Mammary epithelial cell (primary cell): ENCODE measurements at regions of chr7 and their contacts with region 1.

Region 1: DNA sequence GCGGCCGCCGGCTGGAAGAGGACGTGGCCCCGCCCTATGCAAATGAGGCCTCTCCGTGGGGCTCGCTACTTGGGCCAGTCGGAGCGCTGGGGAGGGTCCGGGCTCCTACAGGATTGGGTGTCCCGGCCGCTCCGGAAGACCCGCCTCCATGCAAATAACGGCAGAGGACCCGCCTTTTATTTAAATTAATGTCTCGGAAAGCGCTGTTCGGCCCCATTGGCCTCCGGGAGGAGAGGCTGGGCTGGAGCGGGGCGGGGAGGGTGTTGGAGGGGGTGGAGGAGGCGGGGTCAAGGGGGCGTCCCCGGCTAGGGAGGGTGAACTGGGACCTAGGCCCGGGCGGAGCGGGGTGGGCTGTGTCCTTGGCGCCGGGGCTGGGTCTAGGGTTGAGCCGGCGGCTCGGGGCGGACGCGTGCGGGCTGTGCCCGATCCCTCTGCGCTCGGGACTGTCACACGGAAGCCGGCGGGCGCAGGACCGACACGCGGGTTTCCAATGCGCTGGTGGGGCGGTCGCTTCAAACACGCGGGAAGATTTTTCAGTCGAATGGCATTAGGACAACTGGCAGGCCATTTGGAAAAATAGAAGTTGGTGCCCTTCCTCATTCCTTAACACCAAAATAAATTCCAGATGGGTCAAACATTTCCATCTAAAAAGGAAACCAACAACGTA is 344 bp upstream of the POLM start:
- DNase-seq: peak; percentile 99
- H3K4me3 ChIP-seq: peak overlapping the region; percentile 53 to 84 (median 65)
- H3K27ac ChIP-seq: peak overlapping the region; percentile 18
- H3K4me1 ChIP-seq: peaks cover 3% of the 10 kb centered on the region
- H3K27me3 ChIP-seq: no peaks in the 10 kb centered on the region
- CTCF ChIP-seq: no peak

Region 2: DNA sequence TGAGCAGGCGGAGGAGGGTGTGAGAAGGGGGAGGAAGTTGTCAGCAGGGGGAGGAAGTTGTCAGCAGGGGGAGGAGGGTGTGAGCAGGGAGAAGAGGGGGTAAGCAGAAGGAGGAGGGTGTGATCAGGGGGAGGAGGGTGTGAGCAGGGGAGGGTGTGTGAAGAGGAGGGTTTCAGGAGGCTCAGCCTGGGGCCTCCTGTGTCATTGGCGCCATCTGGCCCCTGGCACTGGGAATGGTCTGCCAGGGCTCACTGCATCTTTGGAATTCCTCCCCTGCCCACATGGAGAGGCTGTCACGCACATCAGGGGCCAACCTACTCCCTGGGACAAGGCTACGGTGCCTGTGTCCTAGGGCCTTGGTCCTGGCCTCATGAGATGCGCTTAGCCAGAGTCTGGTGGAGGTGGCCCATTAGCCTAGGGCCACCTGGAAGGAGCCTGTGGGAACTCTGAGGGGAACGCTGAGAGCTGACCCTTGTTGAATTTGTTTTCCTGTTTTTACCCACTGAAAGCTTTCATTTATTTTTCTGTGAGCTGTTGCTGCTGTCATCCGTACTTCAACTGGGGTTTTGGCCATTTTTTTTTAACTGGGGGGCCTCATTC is 224.7 kb after region 1 on chr7:
- CTCF ChIA-PET with region 1: no interaction called
- dilution Hi-C with region 1: no loop called
- in situ Hi-C with region 1: no loop called
- intact Hi-C with region 1: loop called (anchors 5 kb)
- DNase-seq: peak; percentile 33
- H3K4me3 ChIP-seq: no peak overlapping the region
- H3K27ac ChIP-seq: peak overlapping the region; percentile 58
- H3K4me1 ChIP-seq: peaks cover 18% of the 10 kb centered on the region
- H3K27me3 ChIP-seq: no peaks in the 10 kb centered on the region
- CTCF ChIP-seq: peak; percentile 27 to 44